Activated CD8-positive, alpha-beta memory T cell treated with anti-CD3 and anti-CD28 coated beads, Interleukin-2, amount 10 ng/mL, durations not matched to agents 7 days and 5 days (primary cell): ENCODE measurements at regions of chr5 and their contacts with region 1.

Region 1: DNA sequence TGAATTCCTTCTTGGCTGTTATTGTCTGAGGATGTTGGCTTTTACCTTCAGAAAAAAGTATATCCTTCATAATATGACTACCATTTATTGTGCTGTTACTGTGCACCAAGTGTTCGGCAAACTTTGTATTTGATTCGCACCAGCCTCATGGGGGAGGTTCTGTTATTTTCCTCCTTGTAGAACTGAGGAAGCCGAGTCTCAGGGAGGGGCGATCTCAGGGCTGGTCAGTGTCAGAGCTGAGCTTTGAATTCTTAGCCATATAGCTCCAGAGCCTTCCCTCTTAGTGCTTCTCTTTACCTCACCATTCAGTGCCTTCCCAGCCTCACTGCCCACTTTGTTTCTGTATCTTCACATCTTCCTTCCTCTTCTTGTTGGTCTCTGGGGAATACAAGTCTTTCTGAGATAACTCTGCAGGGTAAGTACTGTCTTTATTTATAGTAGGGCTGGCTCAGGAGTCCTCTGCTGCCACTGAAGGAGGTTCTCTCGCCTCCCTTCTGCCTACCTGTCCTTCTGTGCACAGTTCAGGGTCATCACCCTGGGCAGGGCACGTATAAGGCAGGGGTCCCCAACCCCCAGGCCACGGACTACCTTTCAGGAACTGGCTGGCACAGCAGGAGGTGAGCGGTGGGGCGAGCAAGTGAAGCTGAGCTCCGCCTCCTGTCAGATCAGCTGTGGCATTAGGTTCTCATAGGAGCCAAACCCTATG is 48.4 kb downstream of the GALNT10 start:
- DNase-seq: no peak
- ATAC-seq: no peak
- H3K4me3 Mint-ChIP-seq: no peak overlapping the region
- H3K27ac Mint-ChIP-seq: no peak overlapping the region
- H3K4me1 Mint-ChIP-seq: peaks cover 31% of the 10 kb centered on the region
- H3K27me3 Mint-ChIP-seq: no peaks in the 10 kb centered on the region

Region 2: DNA sequence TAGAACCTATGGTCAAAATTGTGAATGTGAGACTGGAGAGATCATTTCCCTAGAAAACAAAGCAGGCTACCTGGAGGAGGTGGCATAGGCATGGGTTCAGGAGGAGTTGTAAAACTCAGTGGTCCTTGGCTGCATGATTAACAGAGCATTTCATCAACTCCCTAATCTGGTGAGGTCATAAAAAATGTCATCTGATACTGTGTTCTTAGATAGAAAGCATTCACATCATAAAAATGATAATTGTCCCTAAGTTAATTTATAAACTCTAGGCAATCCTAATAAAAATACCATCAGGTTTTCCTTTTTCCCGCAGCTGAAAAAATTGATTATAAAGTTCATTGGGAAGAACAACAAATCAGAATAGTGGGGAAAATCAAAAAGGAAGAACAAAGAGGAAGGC is 109.0 kb before region 1 on chr5:
- CTCF ChIA-PET with region 1: no interaction called
- DNase-seq: no peak
- ATAC-seq: no peak
- H3K4me3 Mint-ChIP-seq: no peak overlapping the region
- H3K27ac Mint-ChIP-seq: no peak overlapping the region
- H3K4me1 Mint-ChIP-seq: no peaks in the 10 kb centered on the region
- H3K27me3 Mint-ChIP-seq: peaks cover 36% of the 10 kb centered on the region

Region 3: DNA sequence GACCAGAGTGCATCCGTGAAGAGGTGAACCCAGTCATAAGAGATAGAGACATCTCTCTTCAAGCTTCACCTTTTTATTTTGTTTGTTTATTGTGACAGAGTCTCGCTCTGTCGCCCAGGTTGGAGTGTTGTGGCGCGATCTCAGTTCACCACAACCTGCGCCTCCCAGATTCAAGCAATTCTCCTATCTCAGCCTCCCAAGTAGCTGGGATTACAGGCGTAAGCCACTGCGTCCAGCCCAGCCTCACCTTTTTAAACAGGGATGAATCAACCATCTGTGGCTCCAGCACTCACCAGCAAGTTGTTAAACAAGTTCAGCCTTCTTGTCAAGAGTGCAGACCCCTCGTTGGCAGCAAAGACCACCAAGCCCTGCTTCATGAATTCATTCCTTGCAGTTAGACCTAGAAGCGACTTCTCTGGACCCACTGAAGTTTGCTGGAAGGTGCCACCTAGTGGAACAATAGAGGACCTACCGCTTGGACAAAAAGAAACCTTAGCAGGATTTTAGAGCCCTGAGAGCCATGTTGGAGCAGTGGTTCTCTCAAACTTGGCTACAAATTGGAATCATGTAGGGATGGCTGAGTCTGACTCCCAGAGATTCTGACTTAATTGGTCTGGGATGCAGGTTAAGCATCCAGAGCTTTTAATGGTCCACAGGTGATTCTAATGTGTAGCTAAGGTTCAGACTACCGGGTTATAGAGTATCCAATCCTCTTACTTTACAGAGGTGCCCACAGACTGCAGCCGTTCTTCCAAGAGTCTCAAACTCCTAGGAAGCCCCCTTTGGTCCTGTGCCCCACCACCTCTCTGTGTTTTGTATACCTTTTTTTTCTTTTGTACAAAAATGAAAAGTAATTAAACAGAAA is 58.9 kb before region 1 on chr5:
- CTCF ChIA-PET with region 1: interaction called, 13 read pairs
- DNase-seq: peak; percentile 57
- ATAC-seq: peak; percentile 91
- H3K4me3 Mint-ChIP-seq: no peak overlapping the region
- H3K27ac Mint-ChIP-seq: no peak overlapping the region
- H3K4me1 Mint-ChIP-seq: peaks cover 15% of the 10 kb centered on the region
- H3K27me3 Mint-ChIP-seq: peaks cover 8% of the 10 kb centered on the region

Region 4: DNA sequence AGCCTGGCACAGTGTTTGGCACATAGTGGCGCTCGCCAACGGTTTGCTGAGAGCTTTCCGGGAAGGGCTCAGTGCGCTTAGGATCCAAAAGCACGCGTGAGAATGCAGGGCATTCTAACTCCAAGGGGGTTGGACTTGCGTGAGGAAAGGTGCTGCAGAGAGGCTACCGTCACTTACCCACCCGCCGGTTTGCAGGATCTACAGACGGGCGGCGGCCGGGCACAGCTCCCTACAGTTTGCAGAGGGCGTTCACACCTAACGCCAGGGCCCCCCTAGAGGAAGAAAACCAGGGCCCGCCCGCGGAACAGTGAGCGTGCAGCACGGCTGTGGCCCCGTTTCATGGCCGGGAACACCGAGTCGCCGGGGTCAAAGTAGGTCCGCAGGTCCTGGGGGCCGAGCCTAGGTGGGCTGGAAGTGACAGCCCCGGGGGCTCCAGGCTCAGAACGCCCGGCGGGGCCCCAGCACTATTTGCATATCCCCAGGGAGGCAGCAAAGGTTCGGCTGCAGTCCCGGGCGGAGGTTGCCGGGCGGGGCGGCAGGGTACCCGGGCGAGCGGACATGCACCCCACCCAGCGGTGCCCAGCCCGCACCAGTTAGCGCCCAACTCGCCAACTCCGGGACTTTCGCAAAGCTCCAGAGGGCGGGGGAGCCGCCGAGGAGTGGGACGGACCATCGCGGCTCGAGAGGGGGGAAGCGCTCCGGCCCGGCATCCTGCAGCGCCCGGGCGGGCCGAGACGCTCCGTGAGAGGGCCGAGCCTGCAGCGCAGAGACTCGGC is 48.9 kb before region 1 on chr5:
- CTCF ChIA-PET with region 1: interaction called, 21 read pairs
- DNase-seq: peak; percentile 86
- ATAC-seq: peak; percentile 84
- H3K4me3 Mint-ChIP-seq: peak overlapping the region; percentile 81
- H3K27ac Mint-ChIP-seq: peak overlapping the region; percentile 68
- H3K4me1 Mint-ChIP-seq: peaks cover 31% of the 10 kb centered on the region
- H3K27me3 Mint-ChIP-seq: peaks cover 3% of the 10 kb centered on the region